ENCODE measurements at regions of chr1 and their contacts with region 1.

Region 1: GRCh38 chr1:206583707-206584648 is 28.3 kb downstream of the EIF2D start:
- DNase-seq: peak; percentile 87
- H3K4me3 ChIP-seq: no peak overlapping the region
- H3K27ac ChIP-seq: no peak overlapping the region
- H3K4me1 ChIP-seq: peaks cover 2% of the 10 kb centered on the region
- H3K27me3 ChIP-seq: no peaks in the 10 kb centered on the region
- CTCF ChIP-seq: peak; percentile 83 to 88 (median 87)
- POLR2A ChIP-seq: no peak

Region 2: GRCh38 chr1:206489980-206490770 is 93.8 kb before region 1 on chr1:
- intact Hi-C with region 1: loop called (anchors 10 kb)
- DNase-seq: peak; percentile 89
- H3K4me3 ChIP-seq: no peak overlapping the region
- H3K27ac ChIP-seq: no peak overlapping the region
- H3K4me1 ChIP-seq: peaks cover 5% of the 10 kb centered on the region
- H3K27me3 ChIP-seq: no peaks in the 10 kb centered on the region
- CTCF ChIP-seq: peak; percentile 74 to 93 (median 88)
- POLR2A ChIP-seq: no peak

Region 3: GRCh38 chr1:206663832-206664652 is 80.1 kb after region 1 on chr1:
- intact Hi-C with region 1: no loop called
- DNase-seq: peak; percentile 78
- H3K4me3 ChIP-seq: no peak overlapping the region
- H3K27ac ChIP-seq: no peak overlapping the region
- H3K4me1 ChIP-seq: peaks cover 5% of the 10 kb centered on the region
- H3K27me3 ChIP-seq: no peaks in the 10 kb centered on the region
- CTCF ChIP-seq: peak; percentile 81 to 92 (median 83)
- POLR2A ChIP-seq: no peak